Endothelial cell of umbilical vein (primary cell): ENCODE measurements at regions of chr11 and their contacts with region 1.

Region 1: GRCh38 chr11:57249384-57250319 is 12.6 kb upstream of the APLNR start:
- DNase-seq: peak; percentile 76
- H3K4me3 ChIP-seq: no peak overlapping the region
- H3K27ac ChIP-seq: no peak overlapping the region
- H3K4me1 ChIP-seq: peaks cover 6% of the 10 kb centered on the region
- H3K27me3 ChIP-seq: peaks cover 5 to 9% of the 10 kb centered on the region in 2 experiments
- CTCF ChIP-seq: peak; percentile 77 to 78
- POLR2A ChIP-seq: no peak

Region 2: GRCh38 chr11:56841210-56841810 is 408.3 kb before region 1 on chr11:
- CTCF ChIA-PET with region 1: interaction called, 197 read pairs
- POLR2A ChIA-PET with region 1: no interaction called
- dilution Hi-C with region 1: no loop called
- intact Hi-C with region 1: loop called (anchors 1 kb)
- DNase-seq: peak; percentile 64
- H3K4me3 ChIP-seq: no peak overlapping the region
- H3K27ac ChIP-seq: no peak overlapping the region
- H3K4me1 ChIP-seq: no peaks in the 10 kb centered on the region
- H3K27me3 ChIP-seq: no peaks in the 10 kb centered on the region
- CTCF ChIP-seq: peak; percentile 44 to 64
- POLR2A ChIP-seq: no peak

Region 3: GRCh38 chr11:57131080-57131790 is 118.4 kb before region 1 on chr11:
- CTCF ChIA-PET with region 1: interaction called, 282 read pairs
- POLR2A ChIA-PET with region 1: no interaction called
- dilution Hi-C with region 1: no loop called
- intact Hi-C with region 1: loop called (anchors 1 kb)
- DNase-seq: peak; percentile 47
- H3K4me3 ChIP-seq: no peak overlapping the region
- H3K27ac ChIP-seq: no peak overlapping the region
- H3K4me1 ChIP-seq: peaks cover 4% of the 10 kb centered on the region
- H3K27me3 ChIP-seq: peaks cover 0 to 2% of the 10 kb centered on the region in 2 experiments
- CTCF ChIP-seq: peak; percentile 43 to 70
- POLR2A ChIP-seq: no peak

Region 4: DNA sequence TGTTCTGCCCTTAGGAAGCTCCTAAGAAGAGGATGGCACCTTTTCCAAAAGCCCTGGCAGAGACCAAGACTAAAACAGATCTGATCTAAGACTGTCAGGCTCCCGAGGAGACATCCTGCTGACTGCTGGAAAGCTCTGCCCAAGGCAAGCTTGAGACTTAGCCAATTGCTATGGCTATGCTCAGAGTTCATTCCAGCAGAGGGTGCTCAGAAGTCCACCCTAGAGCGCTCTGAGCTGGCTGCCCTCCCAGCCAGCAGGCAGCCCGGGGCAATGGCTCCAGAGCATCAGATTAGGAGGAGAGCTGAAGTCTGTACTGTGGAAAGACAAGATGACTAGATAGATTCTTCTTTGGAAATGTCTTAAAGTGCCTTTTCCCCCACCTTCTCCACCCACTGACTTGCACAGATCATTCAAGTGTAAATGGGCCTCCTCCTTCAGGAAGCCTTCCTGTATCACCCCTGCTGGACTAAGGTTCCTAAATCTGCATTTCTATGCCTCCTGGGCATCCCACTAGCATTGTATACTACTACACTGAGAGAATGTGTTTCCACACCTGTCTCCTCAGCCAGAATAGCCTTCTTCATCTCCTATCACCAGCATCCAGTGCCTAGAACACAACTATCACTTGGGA is 44.5 kb before region 1 on chr11:
- CTCF ChIA-PET with region 1: interaction called, 26 read pairs
- POLR2A ChIA-PET with region 1: no interaction called
- dilution Hi-C with region 1: no loop called
- intact Hi-C with region 1: loop called (anchors 2 kb)
- DNase-seq: no peak
- H3K4me3 ChIP-seq: no peak overlapping the region
- H3K27ac ChIP-seq: no peak overlapping the region
- H3K4me1 ChIP-seq: no peaks in the 10 kb centered on the region
- H3K27me3 ChIP-seq: peaks cover 5 to 6% of the 10 kb centered on the region in 2 experiments
- CTCF ChIP-seq: no peak
- POLR2A ChIP-seq: no peak

Region 5: GRCh38 chr11:57269571-57270021 is 19.9 kb after region 1 on chr11:
- CTCF ChIA-PET with region 1: interaction called, 116 read pairs
- POLR2A ChIA-PET with region 1: no interaction called
- dilution Hi-C with region 1: no loop called
- intact Hi-C with region 1: no loop called
- DNase-seq: peak; percentile 74
- H3K4me3 ChIP-seq: no peak overlapping the region
- H3K27ac ChIP-seq: no peak overlapping the region
- H3K4me1 ChIP-seq: no peaks in the 10 kb centered on the region
- H3K27me3 ChIP-seq: no peaks in the 10 kb centered on the region
- CTCF ChIP-seq: no peak
- POLR2A ChIP-seq: no peak

Region 6: GRCh38 chr11:57324886-57325734 is 75.5 kb after region 1 on chr11 and contains the start of gene TNKS1BP1:
- CTCF ChIA-PET with region 1: interaction called, 11 read pairs
- POLR2A ChIA-PET with region 1: no interaction called
- dilution Hi-C with region 1: no loop called
- intact Hi-C with region 1: no loop called
- DNase-seq: peak; percentile 96
- H3K4me3 ChIP-seq: peak within 1 kb of the TSS; percentile 58 to 86 (median 63)
- H3K27ac ChIP-seq: peak within 1 kb of the TSS; percentile 95
- H3K4me1 ChIP-seq: peaks cover 37% of the 10 kb centered on the region
- H3K27me3 ChIP-seq: no peaks in the 10 kb centered on the region
- CTCF ChIP-seq: no peak
- POLR2A ChIP-seq: peak; percentile 70
- total RNA-seq, gene TNKS1BP1: 93.6 and 111 TPM in 2 replicates

Region 7: DNA sequence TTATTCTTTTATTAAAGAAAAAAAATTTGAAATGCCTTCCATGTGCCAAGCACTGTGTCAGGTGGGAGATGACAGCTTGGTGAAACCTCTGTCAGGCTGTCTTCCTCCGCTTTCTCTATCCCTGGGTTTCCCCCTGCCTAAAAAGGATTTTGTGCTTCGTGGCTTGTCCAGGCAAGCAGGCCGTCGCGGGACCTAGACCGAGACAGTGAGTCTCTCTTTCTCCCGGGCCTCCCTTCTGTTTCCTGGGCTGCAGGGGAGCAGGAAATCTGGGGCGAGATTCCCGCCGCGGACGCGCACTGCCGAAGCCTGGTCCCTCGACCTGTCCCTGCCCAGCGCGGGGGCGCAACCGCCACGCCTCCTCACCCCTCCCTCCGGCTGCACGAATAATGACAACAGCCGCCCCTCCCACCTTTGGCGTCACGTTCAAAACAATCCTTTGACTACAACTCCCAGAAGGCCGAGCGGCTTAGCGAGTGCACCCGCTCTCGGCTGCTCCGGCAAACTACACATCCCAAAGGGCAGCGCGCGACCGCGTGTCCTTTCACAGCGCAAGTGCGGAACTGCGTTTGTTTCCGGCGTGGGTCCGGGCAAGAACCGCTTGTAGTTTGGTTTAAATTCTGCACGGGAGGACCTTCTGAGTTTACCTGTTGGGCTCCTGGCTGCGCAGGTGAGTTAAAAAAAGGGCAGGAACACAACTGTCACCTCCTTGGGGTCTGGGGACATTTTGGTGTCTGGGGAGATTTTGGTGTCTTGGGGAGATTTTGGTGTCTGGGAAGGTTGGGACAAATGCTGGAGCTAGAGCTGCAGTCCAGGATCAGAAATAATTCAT is 407.8 kb after region 1 on chr11 and contains the start of gene CLP1:
- CTCF ChIA-PET with region 1: no interaction called
- POLR2A ChIA-PET with region 1: no interaction called
- dilution Hi-C with region 1: no loop called
- intact Hi-C with region 1: no loop called
- DNase-seq: peak; percentile 99
- H3K4me3 ChIP-seq: peak within 1 kb of the TSS; percentile 59 to 98 (median 90)
- H3K27ac ChIP-seq: peak within 1 kb of the TSS; percentile 75
- H3K4me1 ChIP-seq: peaks cover 4% of the 10 kb centered on the region
- H3K27me3 ChIP-seq: no peaks in the 10 kb centered on the region
- CTCF ChIP-seq: no peak
- POLR2A ChIP-seq: peak; percentile 70
- total RNA-seq, gene CLP1: 17.9 and 20.9 TPM in 2 replicates